ENCODE measurements at regions of chr17 and their contacts with region 1.

Region 1: GRCh38 chr17:75904749-75905521 is at the start of gene MRPL38:
- DNase-seq: peak; percentile 96
- H3K4me3 Mint-ChIP-seq: peak within 1 kb of the TSS; percentile 89
- H3K27ac Mint-ChIP-seq: peak within 1 kb of the TSS; percentile 90
- H3K4me1 Mint-ChIP-seq: peaks cover 32% of the 10 kb centered on the region
- H3K27me3 Mint-ChIP-seq: no peaks in the 10 kb centered on the region

Region 2: GRCh38 chr17:76000016-76000754 is 95.2 kb after region 1 on chr17:
- CTCF ChIA-PET with region 1: interaction called, 87 read pairs
- DNase-seq: peak; percentile 78
- H3K4me3 Mint-ChIP-seq: no peak overlapping the region
- H3K27ac Mint-ChIP-seq: no peak overlapping the region
- H3K4me1 Mint-ChIP-seq: peaks cover 15% of the 10 kb centered on the region
- H3K27me3 Mint-ChIP-seq: no peaks in the 10 kb centered on the region

Region 3: GRCh38 chr17:76005263-76006149 is 100.6 kb after region 1 on chr17:
- CTCF ChIA-PET with region 1: interaction called, 87 read pairs
- DNase-seq: peak; percentile 91
- H3K4me3 Mint-ChIP-seq: no peak overlapping the region
- H3K27ac Mint-ChIP-seq: no peak overlapping the region
- H3K4me1 Mint-ChIP-seq: peaks cover 2% of the 10 kb centered on the region
- H3K27me3 Mint-ChIP-seq: peaks cover 7% of the 10 kb centered on the region

Region 4: GRCh38 chr17:76048711-76049110 is 143.8 kb after region 1 on chr17:
- CTCF ChIA-PET with region 1: no interaction called
- DNase-seq: no peak
- H3K4me3 Mint-ChIP-seq: no peak overlapping the region
- H3K27ac Mint-ChIP-seq: no peak overlapping the region
- H3K4me1 Mint-ChIP-seq: no peaks in the 10 kb centered on the region
- H3K27me3 Mint-ChIP-seq: no peaks in the 10 kb centered on the region

Measured in activated naive CD4-positive, alpha-beta T cell treated with anti-CD3 and anti-CD28 coated beads, Interleukin-2, amount 10 ng/mL, durations not matched to agents 7 days and 5 days (primary cell).